HEK293T (cell line): ENCODE measurements at regions of chr12 and their contacts with region 1.

Region 1: DNA sequence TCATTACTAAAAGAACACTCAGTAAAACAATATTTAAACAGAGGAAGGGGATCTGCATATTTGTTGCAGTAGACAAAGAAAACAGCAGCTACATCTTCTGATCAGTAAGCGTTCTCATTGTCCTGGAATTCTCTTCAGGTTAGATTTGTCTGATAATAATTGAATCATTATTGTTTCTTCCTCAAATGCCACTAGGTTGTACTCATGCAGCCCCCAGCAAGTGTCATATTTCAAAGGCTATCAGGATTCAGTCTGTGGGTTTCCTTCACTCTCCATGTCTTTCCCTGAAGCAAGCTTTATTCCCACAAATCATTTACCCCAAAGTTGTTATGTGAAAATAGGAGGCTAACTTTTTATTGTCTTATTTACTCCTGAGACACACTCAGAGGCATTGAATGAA is 14.7 kb downstream of the PIK3C2G start:
- DNase-seq: no peak

Region 2: DNA sequence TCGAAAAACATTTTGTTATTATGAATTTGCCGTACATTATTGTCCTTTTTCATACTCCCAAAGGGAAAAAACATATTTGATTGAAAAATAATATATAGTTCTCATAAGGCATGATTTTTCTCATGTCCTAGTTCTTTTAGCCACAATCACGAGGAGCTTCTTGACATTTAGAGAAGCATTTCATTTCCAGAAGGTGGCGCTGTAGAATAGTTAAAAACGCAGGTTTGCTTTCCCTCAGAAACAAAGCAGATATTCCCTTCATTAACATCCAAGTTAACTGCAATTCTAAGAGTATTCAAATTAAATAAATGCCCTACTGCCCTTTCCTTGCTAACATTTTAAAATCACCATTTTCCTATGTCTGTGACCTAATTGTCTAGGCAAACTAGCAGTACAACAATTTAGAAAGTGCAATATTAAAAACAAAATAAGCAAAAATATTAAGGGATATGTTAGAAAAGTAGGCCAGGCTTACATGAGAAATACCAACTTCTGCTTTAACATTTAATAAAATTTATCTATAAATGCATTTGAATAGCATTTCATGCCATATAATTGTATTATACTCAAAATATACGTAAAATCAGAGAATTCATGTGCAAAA is 25.6 kb before region 1 on chr12:
- CTCF ChIA-PET with region 1: interaction called, 12 read pairs
- POLR2A ChIA-PET with region 1: no interaction called
- DNase-seq: peak; percentile 37